HCT116 (cell line): ENCODE measurements at regions of chr13 and their contacts with region 1.

Region 1: DNA sequence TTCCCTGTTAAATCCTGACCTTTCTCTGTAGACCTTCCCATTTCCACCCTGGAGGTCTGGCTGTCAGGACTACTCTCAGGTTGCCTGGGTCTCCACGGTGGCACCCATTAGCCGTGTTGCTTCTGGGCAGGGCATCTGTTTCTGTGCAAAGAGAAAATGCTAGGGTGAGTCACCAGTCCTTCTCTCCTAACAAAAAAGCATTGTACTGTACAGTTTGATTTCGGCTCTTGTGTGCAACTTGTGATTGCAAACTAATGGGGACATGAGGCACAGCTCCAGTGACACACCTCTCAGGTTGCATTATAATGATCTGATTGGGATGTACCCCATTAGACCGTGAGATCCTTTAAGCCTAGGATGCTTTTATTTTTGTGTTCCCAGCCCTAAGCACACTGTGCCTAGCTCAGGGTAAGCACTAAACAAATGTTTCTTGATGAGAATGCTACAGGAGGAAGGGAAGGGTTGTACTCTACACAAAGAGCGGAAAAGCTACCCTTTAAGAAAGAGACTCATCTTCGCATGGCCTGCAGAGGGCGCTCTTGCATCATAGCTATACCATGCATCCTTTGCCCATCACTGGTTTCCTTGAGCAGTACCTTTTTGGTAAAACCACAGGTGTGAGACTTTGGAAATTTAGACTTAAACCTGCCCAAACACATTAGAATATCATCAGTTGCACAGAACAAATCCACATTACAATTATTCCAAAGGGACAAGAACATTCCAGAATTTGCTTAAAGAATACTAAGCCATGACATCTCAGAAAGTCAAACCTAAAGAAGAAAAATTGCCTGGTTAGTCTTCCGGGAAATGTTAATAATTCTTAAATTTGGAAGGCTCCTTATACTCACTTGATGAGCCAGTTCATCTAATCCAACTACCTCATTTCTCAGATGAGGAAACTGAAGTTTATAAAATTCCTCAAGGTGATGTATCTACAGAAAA is 20.3 kb upstream of the TRIM13 start:
- DNase-seq: peak; percentile 47
- ATAC-seq: peak; percentile 94
- H3K4me3 ChIP-seq: no peak overlapping the region
- H3K27ac ChIP-seq: no peak overlapping the region
- H3K4me1 ChIP-seq: no peaks in the 10 kb centered on the region
- H3K27me3 ChIP-seq: no peaks in the 10 kb centered on the region
- CTCF ChIP-seq: peak; percentile 59 to 97 (median 91); a peak in 5 of 6 replicates
- POLR2A ChIP-seq: no peak
- RAD21 ChIP-seq: peak; percentile 93

Region 2: GRCh38 chr13:50529154-50529882 is 552.7 kb after region 1 on chr13:
- CTCF ChIA-PET with region 1: interaction called, 6 read pairs
- POLR2A ChIA-PET with region 1: no interaction called
- RAD21 ChIA-PET with region 1: interaction called in 1 of 2 experiments, 3 read pairs
- intact Hi-C with region 1: loop called (anchors 1 kb)
- DNase-seq: peak; percentile 65
- ATAC-seq: peak; percentile 94
- H3K4me3 ChIP-seq: peak overlapping the region; percentile 7 to 41; a peak in 3 of 4 replicates
- H3K27ac ChIP-seq: peak overlapping the region; percentile 92
- H3K4me1 ChIP-seq: peaks cover 29 to 32% of the 10 kb centered on the region in 2 experiments
- H3K27me3 ChIP-seq: no peaks in the 10 kb centered on the region
- CTCF ChIP-seq: no peak
- POLR2A ChIP-seq: no peak
- RAD21 ChIP-seq: no peak

Region 3: GRCh38 chr13:50801087-50801931 is 824.7 kb after region 1 on chr13:
- CTCF ChIA-PET with region 1: interaction called, 7 read pairs
- POLR2A ChIA-PET with region 1: no interaction called
- RAD21 ChIA-PET with region 1: no interaction called
- intact Hi-C with region 1: loop called (anchors 1 kb)
- DNase-seq: peak; percentile 27
- ATAC-seq: peak; percentile 97
- H3K4me3 ChIP-seq: no peak overlapping the region
- H3K27ac ChIP-seq: no peak overlapping the region
- H3K4me1 ChIP-seq: no peaks in the 10 kb centered on the region
- H3K27me3 ChIP-seq: no peaks in the 10 kb centered on the region
- CTCF ChIP-seq: peak; percentile 38 to 64 (median 59); a peak in 5 of 6 replicates
- POLR2A ChIP-seq: no peak
- RAD21 ChIP-seq: peak; percentile 79

Region 4: DNA sequence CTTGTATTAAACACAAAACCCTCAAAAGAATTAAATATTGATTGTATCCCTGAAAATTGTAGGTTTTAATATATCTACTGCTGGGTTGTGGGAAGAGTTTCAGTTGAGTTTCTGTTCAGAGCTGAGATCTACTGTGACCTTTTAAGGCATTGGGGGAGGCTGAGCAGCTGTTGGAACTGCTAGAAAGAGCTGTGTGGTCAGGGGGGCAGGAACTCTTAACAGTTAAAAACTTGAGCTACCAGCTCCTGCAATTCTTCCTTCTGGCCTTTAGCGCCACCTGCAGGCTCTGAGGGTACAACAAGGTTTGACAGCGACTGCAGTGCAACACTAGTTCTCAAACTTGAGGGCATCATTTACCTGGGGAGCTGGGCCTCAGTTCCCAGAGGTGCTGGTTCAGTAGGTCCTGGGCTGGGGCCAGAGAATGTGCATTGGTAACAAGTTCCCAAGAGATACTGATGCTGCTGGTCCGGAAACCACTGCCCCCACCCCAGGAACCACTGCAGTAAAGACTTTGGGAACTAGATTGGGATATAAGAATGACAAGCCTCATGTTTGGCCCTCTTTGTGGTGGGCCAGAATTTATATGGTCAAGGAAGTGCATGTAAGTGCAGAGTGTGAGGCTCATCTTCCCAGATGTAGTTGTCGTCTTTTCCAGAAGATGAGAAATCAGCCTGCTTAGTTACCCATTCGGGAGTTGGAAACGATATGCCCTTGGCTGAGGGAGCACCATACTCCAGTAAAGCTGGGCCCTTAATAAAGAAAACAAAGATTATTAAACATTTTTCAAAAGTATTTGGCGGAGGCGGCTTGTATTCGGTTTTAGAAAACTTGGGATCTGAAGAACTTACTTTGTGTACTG is 935.6 kb after region 1 on chr13:
- CTCF ChIA-PET with region 1: interaction called, 26 read pairs
- POLR2A ChIA-PET with region 1: no interaction called
- RAD21 ChIA-PET with region 1: interaction called, 3 to 5 read pairs
- intact Hi-C with region 1: loop called (anchors 1 kb)
- DNase-seq: peak; percentile 80
- ATAC-seq: peak; percentile 18; the same call in 1 of the 2 replicates
- H3K4me3 ChIP-seq: no peak overlapping the region
- H3K27ac ChIP-seq: no peak overlapping the region
- H3K4me1 ChIP-seq: peaks cover 12 to 25% of the 10 kb centered on the region in 2 experiments; a peak in 3 of 4 replicates
- H3K27me3 ChIP-seq: no peaks in the 10 kb centered on the region
- CTCF ChIP-seq: peak; percentile 63 to 88 (median 87); a peak in 5 of 6 replicates
- POLR2A ChIP-seq: no peak
- RAD21 ChIP-seq: peak; percentile 81

Region 5: DNA sequence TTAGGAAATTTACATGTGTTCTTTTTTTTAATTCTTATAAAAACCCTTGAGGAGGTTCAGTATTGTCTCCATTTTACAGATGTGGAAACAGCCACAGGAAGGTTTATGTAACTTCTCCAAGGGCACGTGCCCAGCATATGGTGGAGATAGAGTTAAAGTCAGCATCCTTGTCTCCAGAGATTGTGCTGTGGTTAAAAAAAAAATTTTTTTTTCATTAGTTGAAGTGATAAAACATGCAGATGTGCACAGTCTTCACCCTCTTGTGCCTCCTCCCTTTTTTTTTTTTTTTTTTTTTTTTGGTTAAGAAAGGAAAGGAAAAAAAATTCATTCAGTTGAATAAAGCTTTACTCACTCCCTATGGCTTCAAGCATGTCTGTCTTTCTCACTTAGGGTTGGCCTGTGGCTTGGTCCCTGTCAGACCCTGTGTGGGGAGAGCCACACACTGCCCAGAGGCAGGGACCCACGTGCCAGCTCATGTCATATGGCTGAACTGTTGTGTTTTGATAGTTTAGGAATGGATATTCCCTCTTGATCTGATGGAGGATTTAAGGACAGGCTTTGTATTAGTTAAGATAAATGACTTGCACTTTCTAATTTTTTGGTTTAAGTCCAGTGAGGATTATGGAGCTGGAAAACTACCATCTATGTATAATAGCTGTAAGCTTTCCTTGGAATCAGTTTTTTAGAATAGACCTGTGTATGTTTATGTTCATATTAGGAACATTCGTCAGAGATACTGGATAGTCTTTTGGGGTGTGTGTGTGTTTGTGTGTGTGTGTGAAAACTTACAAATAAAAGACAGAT is 952.3 kb after region 1 on chr13:
- CTCF ChIA-PET with region 1: no interaction called
- POLR2A ChIA-PET with region 1: no interaction called
- RAD21 ChIA-PET with region 1: no interaction called
- intact Hi-C with region 1: loop called (anchors 5 kb)
- DNase-seq: no peak
- ATAC-seq: no peak
- H3K4me3 ChIP-seq: no peak overlapping the region
- H3K27ac ChIP-seq: no peak overlapping the region
- H3K4me1 ChIP-seq: no peaks in the 10 kb centered on the region
- H3K27me3 ChIP-seq: no peaks in the 10 kb centered on the region
- CTCF ChIP-seq: no peak
- POLR2A ChIP-seq: no peak
- RAD21 ChIP-seq: no peak